ENCODE measurements at regions of chr11 and their contacts with region 1.

Region 1: DNA sequence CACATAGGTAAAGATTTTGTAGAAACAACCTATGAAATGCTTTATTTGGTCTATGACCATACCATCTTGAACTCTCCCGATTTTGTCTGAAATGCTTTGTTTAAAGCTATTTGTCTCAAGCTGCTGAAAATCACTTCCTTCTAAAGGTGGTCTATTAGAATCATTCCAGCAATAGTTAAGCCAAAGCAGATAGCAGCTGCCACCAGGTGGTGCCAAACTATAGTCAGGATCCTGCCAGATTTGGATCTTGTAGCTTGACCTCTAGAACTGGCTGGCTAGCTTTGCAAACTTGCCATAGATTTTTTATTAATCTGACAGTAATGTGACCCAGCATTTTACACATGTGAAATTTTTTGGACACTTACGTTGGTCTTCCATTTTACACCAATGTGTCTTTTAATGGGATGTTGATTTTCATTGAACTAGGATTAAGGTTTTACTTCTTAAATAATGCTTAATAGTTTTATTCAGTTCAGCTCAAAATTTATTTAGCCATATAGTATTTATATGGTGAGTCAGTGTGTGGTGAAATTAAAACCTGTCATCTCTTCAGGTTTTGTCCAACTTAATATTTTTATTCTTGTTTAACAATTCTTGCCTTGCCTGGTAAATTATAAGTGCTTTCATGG is 19.7 kb downstream of the CTR9 start:
- DNase-seq: peak; percentile 33
- CTCF ChIP-seq: peak; percentile 55

Region 2: GRCh38 chr11:10750838-10751580 is 19.7 kb before region 1 on chr11 and contains the start of gene CTR9:
- CTCF ChIA-PET with region 1: interaction called, 10 read pairs
- POLR2A ChIA-PET with region 1: interaction called, 3 read pairs
- DNase-seq: peak; percentile 91
- CTCF ChIP-seq: peak; percentile 53

Region 3: DNA sequence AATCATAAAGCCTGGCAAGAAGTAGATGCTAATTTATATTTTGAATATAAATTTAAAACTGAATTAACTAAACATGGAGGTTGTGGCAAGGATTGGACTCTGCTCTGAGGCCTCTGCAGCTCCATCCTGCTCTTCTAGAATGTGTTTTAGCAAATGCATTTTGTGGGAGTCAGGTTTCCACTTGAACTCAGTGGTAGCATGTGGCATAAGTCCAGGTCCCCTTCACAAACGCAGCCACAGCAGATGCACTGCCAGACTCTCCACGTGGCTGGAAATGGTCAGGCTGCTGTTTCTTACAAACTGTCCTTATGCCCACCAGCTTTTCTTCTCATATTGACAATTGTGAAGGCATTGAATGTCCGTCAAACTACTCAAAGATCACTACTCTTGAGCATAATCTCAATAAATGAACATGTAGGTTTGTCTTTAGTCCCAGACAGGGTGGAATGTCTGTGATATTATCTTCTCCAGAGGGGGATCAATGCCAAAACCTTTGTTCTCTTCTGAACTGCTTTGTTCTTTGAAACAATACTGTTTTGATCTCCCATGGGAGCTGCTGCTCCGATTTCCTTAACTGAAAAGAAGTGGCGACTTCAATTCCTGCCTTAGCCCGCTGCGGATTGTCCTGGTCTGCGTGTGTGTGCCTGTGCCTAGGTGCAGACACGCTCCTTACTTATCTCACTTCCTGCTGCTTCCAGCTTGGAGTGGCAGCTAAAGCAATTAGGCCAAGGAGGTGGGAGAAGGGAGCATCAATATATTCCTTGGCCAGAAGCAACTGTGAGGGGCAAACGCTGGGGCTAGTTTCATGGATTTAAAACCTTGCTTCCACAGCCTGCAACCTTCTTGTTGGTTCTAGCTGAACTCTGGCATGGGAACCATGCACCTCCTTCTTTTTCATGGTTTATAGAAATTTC is 13.7 kb after region 1 on chr11:
- CTCF ChIA-PET with region 1: interaction called, 12 read pairs
- POLR2A ChIA-PET with region 1: no interaction called
- DNase-seq: no peak
- CTCF ChIP-seq: no peak

Region 4: DNA sequence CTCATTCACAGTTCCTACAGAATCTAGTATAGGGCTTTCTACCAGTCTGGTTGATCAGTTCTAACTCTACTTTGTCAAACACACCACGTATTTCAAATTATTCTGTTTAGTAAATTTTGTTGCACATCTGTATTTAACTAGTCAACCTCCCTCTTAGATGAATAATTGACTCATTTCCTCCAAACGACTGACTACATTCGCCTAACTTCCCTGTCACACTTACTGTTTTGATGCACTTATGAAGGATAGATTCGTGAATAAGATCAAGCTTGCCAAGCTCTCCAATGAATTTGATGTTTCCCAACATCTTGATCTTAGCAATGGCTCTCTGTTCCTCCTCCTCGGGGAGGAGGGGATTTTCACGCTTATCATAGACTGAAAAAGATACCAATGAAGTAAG is 32.9 kb after region 1 on chr11:
- CTCF ChIA-PET with region 1: interaction called, 18 read pairs
- POLR2A ChIA-PET with region 1: interaction called, 6 read pairs
- DNase-seq: no peak
- CTCF ChIP-seq: no peak

Region 5: GRCh38 chr11:10885703-10886363 is 115.1 kb after region 1 on chr11:
- CTCF ChIA-PET with region 1: no interaction called
- POLR2A ChIA-PET with region 1: no interaction called
- DNase-seq: no peak
- CTCF ChIP-seq: no peak

Measured in GM10248 (cell line).